ENCODE measurements at regions of chr9 and their contacts with region 1.

Region 1: DNA sequence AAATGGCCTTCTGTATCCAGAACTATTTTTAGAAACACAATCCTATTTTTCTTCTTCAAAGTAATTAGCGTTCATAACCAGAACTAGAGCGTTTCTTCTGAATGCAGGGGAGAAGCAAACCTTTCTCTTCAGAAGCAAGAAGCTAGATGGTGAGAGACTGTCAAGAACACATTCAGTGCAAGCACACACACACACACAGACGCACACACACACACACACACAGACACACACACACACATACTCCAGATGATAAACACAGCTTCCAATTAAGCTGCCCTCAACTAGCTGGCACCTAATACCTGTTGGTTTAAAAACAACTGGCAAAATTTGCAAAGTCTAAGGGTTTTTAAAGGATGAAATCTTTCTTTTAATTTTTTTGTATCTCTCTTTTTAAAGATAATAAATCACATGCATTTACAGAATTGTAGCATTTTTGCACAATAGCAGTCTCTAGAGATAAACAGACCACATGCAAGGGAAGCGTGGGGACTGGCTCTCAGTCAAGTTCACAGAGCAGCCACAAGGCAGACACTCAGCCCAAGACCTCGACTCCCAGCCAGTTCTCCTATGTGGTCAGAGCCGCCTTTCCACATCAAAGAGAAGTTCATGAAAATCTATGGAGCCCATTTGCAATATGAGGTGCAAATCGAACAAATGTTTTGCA is 138.5 kb downstream of the TTLL11 start:
- DNase-seq: peak in 1 of 2 donors; percentile 65
- H3K4me3 ChIP-seq: no peak overlapping the region
- H3K27ac ChIP-seq: no peak overlapping the region
- H3K4me1 ChIP-seq: no peaks in the 10 kb centered on the region
- H3K27me3 ChIP-seq: no peaks in the 10 kb centered on the region
- CTCF ChIP-seq: no peak

Region 2: DNA sequence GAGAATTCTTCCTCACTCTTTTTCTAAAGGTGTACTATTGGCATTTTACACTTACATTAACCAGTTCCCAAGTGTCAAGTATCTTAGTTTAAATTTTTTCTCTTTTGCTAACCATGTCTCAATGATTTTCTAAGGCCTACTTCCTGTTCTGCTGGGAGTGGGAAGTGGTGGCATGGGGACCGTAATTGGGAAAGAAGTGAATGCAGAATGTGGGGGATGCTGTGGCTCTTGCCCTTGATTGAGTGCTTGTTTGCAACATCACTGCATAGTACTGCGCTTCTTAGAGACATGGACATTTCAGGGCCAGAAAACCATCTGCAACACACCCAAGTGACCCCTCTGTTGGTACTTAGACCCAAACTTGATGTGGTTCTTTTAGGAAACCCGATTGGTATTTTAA is 342.9 kb after region 1 on chr9:
- intact Hi-C with region 1: loop called (anchors 10 kb)
- DNase-seq: no peak
- H3K4me3 ChIP-seq: no peak overlapping the region
- H3K27ac ChIP-seq: no peak overlapping the region
- H3K4me1 ChIP-seq: no peaks in the 10 kb centered on the region
- H3K27me3 ChIP-seq: no peaks in the 10 kb centered on the region
- CTCF ChIP-seq: no peak

Measured in tibial artery (tissue), 4 donors.